ENCODE measurements at regions of chr2 and their contacts with region 1.

Region 1: DNA sequence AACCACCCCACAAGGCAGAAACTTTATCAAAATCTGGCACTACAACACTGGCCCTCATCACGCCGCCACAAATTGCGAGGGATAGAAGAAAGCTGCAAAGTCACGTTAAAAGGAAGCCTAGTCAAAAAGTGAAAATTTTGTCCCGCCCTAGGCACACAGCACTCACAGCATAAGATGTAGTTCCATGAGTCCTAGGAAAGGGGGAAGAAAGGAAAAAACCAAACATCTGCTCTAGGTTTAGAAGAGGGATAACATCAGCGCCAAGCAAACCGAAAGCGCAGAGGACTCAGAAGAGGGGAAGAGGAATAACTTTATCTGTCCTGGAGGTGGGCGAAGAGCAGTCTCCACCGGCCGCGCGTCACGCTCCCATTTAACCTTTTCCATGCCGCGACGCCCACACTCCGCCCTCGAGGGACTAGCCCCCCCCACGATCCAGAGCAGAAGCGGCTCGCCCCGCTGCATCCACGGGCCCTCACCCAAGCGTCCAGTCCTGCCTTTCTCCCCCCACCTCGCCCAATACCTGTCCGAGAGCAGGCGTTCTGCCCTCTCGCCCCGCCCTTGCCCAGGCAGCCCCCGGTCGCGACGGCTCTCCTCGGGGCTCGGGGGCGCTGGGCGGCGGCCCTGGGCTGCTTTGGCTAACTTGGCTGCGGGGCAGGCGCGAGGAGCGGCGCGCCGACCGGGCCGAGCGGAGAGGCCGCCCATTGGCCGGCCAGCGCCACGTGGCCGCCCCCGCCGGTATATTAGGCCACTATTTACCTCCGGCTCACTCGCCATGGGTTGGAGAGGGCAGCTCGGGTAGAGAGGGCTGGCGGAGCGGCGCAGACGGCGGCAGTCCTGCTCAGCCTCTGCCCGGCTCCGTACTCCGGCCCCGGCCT is at the start of gene HOXD1:
- DNase-seq: peak in 4 of 5 donors; percentile 33 to 68 (median 54)
- H3K4me3 ChIP-seq: peak within 1 kb of the TSS; percentile 71
- H3K27ac ChIP-seq: no peak within 1 kb of the TSS
- H3K4me1 ChIP-seq: peaks cover 2% of the 10 kb centered on the region
- H3K27me3 ChIP-seq: no peaks in the 10 kb centered on the region
- CTCF ChIP-seq: no peak
- EP300 ChIP-seq: no peak
- POLR2A ChIP-seq: no peak
- total RNA-seq, gene HOXD1: 0.23 to 5.3 (median 0.52) TPM

Region 2: DNA sequence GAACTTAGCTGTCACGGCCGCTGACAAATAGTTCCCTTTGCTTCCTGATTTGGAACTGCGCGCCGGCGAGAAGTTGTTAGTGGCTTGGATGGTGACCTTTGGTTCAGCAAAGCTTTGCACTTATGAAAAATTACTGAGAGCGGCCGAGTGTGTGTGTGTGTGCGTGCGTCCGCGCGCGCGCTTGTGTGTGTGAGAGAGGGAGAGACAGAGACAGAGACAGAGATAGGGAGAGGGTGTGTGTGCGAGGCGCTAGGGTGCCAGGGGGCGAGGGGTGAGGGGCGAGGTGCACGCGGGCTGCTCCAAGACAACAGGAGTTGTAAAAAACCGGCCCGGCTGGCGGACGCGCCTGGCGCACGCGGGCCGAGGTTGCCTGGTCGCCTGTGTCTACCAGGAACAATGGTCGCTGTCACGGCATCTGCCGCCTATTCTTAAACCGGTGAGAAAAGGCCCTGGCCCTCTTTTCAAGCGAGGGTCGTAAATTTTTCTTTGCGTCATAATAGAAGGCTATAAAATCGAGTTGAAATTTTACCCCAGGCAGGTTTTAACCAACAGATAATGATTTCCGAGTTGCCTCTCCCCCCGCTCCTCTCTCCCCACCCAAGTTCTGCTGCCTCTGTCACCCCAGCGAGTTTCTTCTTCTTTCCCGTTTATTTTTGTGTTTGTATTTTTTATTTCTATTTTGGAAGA is 30.5 kb before region 1 on chr2:
- intact Hi-C with region 1: loop called in 1 of 4 experiments (anchors 1 kb)
- DNase-seq: peak in 2 of 5 donors; percentile 16 to 27
- H3K4me3 ChIP-seq: peak overlapping the region; percentile 42
- H3K27ac ChIP-seq: no peak overlapping the region
- H3K4me1 ChIP-seq: no peaks in the 10 kb centered on the region
- H3K27me3 ChIP-seq: no peaks in the 10 kb centered on the region
- CTCF ChIP-seq: no peak
- EP300 ChIP-seq: no peak
- POLR2A ChIP-seq: no peak

Measured in ovary (tissue), 10 donors.